Heart right ventricle (tissue), 16 donors: ENCODE measurements at regions of chr7 and their contacts with region 1.

Region 1: DNA sequence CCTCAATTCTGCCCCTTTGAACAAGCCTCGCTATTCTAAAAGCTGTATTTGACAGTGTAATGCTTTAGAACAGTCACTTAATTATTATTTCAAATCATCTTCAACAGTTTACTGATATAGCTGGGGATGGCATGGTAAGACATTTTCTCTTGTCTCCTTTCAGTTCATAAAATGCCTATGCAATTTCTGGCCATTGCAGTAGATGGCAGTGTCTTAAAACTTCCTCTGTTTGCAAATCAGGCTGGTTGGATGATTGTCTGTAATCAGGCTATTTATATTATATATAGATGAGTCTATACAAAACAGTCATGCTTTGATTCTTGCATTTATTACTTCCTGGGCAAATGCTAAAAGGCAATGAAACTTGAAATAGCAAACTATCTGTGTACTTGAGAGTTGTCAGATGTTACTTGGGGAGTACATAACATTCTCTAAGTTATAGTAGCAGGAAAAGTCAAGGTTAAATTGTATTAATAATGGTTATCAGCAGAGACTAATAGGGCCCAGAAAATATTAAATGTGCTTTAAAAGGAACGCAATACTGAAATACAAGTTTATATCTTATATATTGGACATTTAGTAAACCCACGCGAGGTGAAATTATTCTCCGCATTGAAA is 55.5 kb upstream of the LHFPL3 start:
- DNase-seq: no peak
- ATAC-seq: no peak
- H3K4me3 ChIP-seq: no peak overlapping the region
- H3K27ac ChIP-seq: no peak overlapping the region
- H3K4me1 ChIP-seq: no peaks in the 10 kb centered on the region
- H3K27me3 ChIP-seq: peaks cover 0 to 8% (median 0%) of the 10 kb centered on the region in 7 donors
- CTCF ChIP-seq: peak in 8 of 9 donors; percentile 11 to 65 (median 43)

Region 2: GRCh38 chr7:104530251-104530650 is 257.4 kb after region 1 on chr7:
- intact Hi-C with region 1: loop called in 1 of 10 experiments (anchors 10 kb)
- DNase-seq: no peak
- ATAC-seq: no peak
- H3K4me3 ChIP-seq: no peak overlapping the region
- H3K27ac ChIP-seq: no peak overlapping the region
- H3K4me1 ChIP-seq: no peaks in the 10 kb centered on the region
- H3K27me3 ChIP-seq: no peaks in the 10 kb centered on the region
- CTCF ChIP-seq: no peak